ENCODE measurements at regions of chr1 and their contacts with region 1.

Region 1: DNA sequence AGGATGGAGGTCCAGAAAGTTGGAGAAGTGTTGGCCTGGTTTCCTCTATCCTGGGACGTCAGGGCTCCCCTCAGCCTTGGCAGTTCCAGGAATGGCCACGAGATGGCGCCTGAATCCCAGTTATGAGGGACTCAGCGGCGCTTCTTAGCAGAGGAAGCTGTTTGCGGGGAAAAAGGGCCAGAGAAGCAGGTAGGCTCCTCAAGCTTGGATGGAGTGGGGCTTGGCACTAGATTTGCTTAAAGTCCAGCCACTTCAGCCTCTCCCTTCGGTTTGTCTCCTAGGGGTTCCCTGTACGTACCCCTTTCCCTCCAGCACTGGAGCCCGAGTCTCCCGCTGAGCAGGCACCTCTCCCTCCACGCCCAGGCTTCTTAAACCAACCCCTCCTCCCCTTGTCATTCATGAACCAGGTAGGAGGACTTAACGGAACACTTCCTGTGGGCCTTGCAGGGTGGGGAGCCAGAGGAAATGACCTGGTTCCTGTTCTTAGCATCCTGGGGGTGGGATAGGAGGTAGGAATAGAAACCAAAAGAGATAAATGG is 32.0 kb upstream of the TENT5B start:
- DNase-seq: peak; percentile 93
- ATAC-seq: peak; percentile 89
- H3K4me3 Mint-ChIP-seq: peak overlapping the region; percentile 75
- H3K27ac Mint-ChIP-seq: peak overlapping the region; percentile 73
- H3K4me1 Mint-ChIP-seq: peaks cover 22% of the 10 kb centered on the region
- H3K27me3 Mint-ChIP-seq: peaks cover 3% of the 10 kb centered on the region

Region 2: DNA sequence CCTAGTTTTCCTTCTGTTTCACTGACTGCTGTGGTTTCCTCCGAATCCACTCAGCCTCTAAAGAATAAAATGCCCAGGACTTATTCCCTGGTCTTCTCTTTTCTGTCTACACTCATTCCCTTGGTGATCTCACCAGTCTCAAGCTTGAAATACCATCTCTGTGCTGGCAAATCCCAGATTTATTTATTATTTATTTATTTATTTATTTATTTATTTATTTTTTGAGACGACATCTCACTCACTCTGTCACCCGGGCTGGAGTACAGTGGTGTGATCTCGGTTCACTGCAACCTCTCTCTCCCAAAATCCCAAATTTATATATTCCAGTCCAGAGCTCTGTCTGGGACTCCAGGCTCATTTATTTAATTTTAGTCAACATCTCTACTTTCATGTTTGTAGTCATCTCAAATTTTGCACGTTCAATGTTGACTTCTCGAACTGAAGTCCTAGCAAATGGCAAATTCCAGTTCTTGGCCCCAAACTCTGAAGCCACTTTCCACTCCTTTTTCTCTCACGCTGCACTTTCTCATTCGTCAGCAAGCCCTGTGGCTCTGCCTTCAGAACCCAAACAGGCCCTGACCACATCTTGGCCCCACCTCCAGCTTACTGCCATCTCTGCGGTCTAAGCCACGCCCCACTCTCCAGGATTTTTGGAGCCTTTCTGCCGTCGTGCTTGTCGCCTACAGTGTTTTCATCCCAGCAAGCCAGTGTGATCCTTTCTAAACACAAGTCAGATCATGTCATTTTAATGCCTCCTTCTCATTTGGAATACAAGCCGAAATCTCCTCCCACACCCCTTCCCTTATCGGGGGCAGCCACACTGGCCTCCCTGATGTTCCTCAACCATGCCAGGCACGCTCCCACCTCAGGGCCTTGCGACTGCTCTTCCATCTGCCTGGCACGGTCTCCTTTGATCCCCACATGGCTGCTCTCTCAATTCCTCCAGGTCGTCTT is 17.8 kb before region 1 on chr1:
- CTCF ChIA-PET with region 1: interaction called, 11 read pairs
- DNase-seq: no peak
- ATAC-seq: no peak
- H3K4me3 Mint-ChIP-seq: no peak overlapping the region
- H3K27ac Mint-ChIP-seq: no peak overlapping the region
- H3K4me1 Mint-ChIP-seq: peaks cover 2% of the 10 kb centered on the region
- H3K27me3 Mint-ChIP-seq: peaks cover 10% of the 10 kb centered on the region

Region 3: GRCh38 chr1:27057801-27058625 is 13.3 kb after region 1 on chr1:
- CTCF ChIA-PET with region 1: interaction called, 81 read pairs
- DNase-seq: no peak
- ATAC-seq: no peak
- H3K4me3 Mint-ChIP-seq: no peak overlapping the region
- H3K27ac Mint-ChIP-seq: no peak overlapping the region
- H3K4me1 Mint-ChIP-seq: no peaks in the 10 kb centered on the region
- H3K27me3 Mint-ChIP-seq: no peaks in the 10 kb centered on the region

Region 4: DNA sequence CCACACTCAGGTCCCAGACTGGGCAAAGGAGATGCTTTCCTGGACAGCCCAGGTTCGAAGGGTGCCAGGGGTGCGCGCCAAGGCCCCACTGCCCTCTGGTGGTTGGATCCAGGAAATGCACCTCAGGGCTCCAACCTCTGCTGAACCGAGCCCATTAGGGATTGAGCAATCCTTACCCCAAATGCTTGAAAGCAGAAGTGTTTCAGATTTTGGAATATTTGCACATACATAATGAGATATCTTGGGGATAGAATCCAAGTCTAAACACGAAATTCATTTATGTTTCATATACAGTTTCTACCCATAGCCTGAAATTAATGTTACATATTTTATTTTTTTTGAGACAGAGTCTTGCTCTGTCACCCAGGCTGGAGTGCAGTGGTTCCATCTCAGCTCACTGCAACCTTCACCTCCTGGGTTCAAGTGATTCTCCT is 52.8 kb after region 1 on chr1:
- CTCF ChIA-PET with region 1: interaction called, 450 read pairs
- DNase-seq: peak; percentile 85
- ATAC-seq: peak; percentile 87
- H3K4me3 Mint-ChIP-seq: no peak overlapping the region
- H3K27ac Mint-ChIP-seq: no peak overlapping the region
- H3K4me1 Mint-ChIP-seq: peaks cover 23% of the 10 kb centered on the region
- H3K27me3 Mint-ChIP-seq: no peaks in the 10 kb centered on the region

Region 5: GRCh38 chr1:27284425-27285273 is 240.0 kb after region 1 on chr1:
- CTCF ChIA-PET with region 1: interaction called, 24 read pairs
- DNase-seq: peak; percentile 92
- ATAC-seq: peak; percentile 97
- H3K4me3 Mint-ChIP-seq: no peak overlapping the region
- H3K27ac Mint-ChIP-seq: no peak overlapping the region
- H3K4me1 Mint-ChIP-seq: peaks cover 4% of the 10 kb centered on the region
- H3K27me3 Mint-ChIP-seq: no peaks in the 10 kb centered on the region

Measured in activated CD8-positive, alpha-beta memory T cell treated with anti-CD3 and anti-CD28 coated beads, Interleukin-2, amount 10 ng/mL, durations not matched to agents 7 days and 5 days (primary cell).